Activated naive CD4-positive, alpha-beta T cell treated with anti-CD3 and anti-CD28 coated beads for 36 hours (primary cell): ENCODE measurements at regions of chr1 and their contacts with region 1.

Region 1: GRCh38 chr1:169586395-169587255 is at the start of gene F5:
- DNase-seq: peak; percentile 94
- H3K4me3 Mint-ChIP-seq: peak within 1 kb of the TSS; percentile 94
- H3K27ac Mint-ChIP-seq: peak within 1 kb of the TSS; percentile 97
- H3K4me1 Mint-ChIP-seq: peaks cover 60% of the 10 kb centered on the region
- H3K27me3 Mint-ChIP-seq: no peaks in the 10 kb centered on the region
- total RNA-seq, gene F5: 58.6 to 59.1 TPM

Region 2: DNA sequence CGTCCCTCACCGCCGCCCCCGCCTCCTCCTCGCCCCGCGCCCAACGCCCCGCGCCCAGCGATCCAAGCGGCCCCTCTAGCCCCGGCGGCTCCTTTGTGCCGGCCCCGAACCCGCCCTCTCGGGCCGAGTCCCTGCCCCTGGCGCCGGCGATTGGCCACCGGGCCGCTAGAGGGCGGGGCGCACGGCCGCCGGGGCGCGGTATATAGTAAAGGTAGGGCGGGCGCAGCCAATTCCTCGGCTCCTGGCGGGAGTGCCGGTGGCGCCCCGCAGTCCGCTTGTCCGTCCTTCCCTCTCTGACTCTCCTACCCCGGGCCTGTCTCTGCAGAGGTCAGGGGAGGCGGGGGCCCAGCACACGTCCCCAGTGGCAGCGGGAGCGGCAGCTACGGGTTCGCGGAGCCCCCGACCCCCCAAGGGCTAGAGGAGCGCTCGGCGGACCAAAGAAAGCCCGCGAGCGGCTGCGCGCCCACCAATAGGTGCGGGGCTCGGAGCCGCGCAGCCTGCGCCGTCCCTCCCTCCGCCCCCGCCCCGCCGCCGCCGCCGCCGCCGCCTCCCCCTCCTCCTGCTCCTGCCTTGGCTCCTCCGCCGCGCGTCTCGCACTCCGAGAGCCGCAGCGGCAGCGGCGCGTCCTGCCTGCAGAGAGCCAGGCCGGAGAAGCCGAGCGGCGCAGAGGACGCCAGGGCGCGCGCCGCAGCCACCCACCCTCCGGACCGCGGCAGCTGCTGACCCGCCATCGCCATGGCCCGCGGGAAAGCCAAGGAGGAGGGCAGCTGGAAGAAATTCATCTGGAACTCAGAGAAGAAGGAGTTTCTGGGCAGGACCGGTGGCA is 480.3 kb before region 1 on chr1 and contains the start of gene ATP1B1:
- CTCF ChIA-PET with region 1: no interaction called
- intact Hi-C with region 1: loop called (anchors 5 kb)
- DNase-seq: peak; percentile 78
- H3K4me3 Mint-ChIP-seq: peak within 1 kb of the TSS; percentile 77
- H3K27ac Mint-ChIP-seq: peak within 1 kb of the TSS; percentile 16
- H3K4me1 Mint-ChIP-seq: peaks cover 43% of the 10 kb centered on the region
- H3K27me3 Mint-ChIP-seq: peaks cover 15% of the 10 kb centered on the region
- total RNA-seq, gene ATP1B1: 5.6 to 6.2 TPM

Region 3: DNA sequence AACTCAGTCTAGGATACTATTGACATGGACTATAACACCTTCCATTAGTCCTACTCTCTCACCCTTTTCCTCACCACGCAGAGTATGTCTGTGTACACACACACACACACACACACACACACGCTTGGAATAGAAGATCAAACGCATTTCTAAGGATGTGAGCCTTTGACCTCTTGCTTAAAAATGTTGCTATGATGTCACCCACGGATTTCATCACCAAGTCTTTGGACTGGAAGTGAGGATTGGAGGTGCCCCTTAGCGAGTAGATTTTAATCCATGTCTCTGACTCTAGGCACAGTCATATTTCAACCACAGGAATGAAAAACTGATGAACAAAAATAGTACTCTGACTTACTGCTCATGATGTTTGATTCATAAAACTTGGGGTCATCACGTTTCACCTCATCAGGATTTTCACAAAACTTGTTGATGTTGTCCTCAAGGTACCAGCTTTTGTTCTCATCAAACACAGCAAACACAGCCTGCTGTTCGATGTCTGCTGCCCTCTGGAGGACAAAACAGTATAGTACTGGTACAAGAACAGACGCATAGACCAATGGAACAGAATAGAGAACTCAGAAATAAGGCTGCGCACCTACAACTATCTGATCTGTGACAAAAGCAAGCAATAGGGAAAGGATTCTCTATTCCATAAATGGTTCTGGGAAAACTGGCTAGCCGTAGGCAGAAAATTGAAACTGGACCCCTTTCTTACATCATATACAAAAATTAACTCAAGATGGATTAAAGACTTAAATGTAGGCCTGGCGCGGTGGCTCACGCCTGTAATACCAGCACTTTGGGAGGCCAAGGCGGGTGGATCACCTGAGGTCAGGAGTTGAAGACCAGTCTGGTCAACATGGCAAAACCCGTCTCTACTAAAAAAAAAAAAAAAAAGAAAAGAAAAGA is 40.3 kb before region 1 on chr1:
- CTCF ChIA-PET with region 1: interaction called, 11 read pairs
- intact Hi-C with region 1: loop called (anchors 2 kb)
- DNase-seq: peak; percentile 48
- H3K4me3 Mint-ChIP-seq: no peak overlapping the region
- H3K27ac Mint-ChIP-seq: no peak overlapping the region
- H3K4me1 Mint-ChIP-seq: no peaks in the 10 kb centered on the region
- H3K27me3 Mint-ChIP-seq: no peaks in the 10 kb centered on the region

Region 4: GRCh38 chr1:169694304-169695075 is 107.9 kb after region 1 on chr1:
- CTCF ChIA-PET with region 1: interaction called, 16 read pairs
- intact Hi-C with region 1: loop called (anchors 1 kb)
- DNase-seq: peak; percentile 59
- H3K4me3 Mint-ChIP-seq: peak overlapping the region; percentile 32
- H3K27ac Mint-ChIP-seq: peak overlapping the region; percentile 94
- H3K4me1 Mint-ChIP-seq: peaks cover 96% of the 10 kb centered on the region
- H3K27me3 Mint-ChIP-seq: no peaks in the 10 kb centered on the region

Region 5: GRCh38 chr1:169794530-169795416 is 208.1 kb after region 1 on chr1 and contains the start of gene METTL18:
- CTCF ChIA-PET with region 1: interaction called, 4 read pairs
- intact Hi-C with region 1: loop called (anchors 1 kb)
- DNase-seq: peak; percentile 97
- H3K4me3 Mint-ChIP-seq: peak within 1 kb of the TSS; percentile 99
- H3K27ac Mint-ChIP-seq: peak within 1 kb of the TSS; percentile 99
- H3K4me1 Mint-ChIP-seq: peaks cover 48% of the 10 kb centered on the region
- H3K27me3 Mint-ChIP-seq: no peaks in the 10 kb centered on the region
- total RNA-seq, gene METTL18: 10.6 to 11.1 TPM